ENCODE measurements at regions of chr4 and their contacts with region 1.

Region 1: DNA sequence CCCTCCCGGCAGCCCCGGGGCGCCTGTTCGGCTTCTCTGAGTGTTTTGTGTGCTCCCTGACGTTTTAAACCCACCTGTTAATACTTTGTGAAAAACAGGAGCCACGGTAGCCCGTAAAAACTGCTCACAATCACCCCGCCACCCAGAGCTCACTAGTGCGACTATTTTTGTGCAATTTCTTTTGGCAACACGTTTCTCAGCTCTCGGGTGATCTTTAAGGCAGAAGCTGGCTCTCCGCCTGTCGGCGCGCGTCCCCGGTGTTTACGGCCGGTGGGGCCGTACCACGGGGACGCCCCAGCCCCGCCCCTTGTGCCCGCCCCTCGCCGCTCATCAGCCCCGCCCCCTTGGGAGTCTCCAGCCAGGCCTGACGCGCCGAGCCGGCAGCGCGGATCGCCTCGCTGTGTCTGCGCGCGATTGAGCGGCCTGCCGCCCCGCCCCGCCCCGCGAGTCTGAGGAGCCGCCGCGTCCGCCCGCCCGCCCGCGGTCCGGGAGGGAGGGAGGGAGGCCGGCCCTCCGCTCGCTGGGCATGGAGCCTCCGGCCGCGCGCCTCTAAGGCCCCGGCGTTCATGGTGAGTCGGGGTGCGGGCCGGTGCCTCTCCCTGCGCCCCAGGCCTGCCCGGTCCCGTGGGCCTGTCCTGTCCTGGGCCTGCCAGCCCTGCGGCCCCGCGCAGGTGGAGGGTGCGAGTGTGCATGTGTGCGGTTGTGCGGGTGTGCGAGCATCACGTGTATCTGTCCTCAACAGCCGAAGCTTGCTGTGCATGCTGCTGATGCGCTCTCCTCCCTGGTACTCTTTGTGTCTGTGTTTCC is 56.2 kb upstream of the TADA2B start:
- DNase-seq: peak; percentile 94
- H3K4me3 Mint-ChIP-seq: peak overlapping the region; percentile 100
- H3K27ac Mint-ChIP-seq: peak overlapping the region; percentile 94
- H3K4me1 Mint-ChIP-seq: peaks cover 83% of the 10 kb centered on the region
- H3K27me3 Mint-ChIP-seq: no peaks in the 10 kb centered on the region

Region 2: DNA sequence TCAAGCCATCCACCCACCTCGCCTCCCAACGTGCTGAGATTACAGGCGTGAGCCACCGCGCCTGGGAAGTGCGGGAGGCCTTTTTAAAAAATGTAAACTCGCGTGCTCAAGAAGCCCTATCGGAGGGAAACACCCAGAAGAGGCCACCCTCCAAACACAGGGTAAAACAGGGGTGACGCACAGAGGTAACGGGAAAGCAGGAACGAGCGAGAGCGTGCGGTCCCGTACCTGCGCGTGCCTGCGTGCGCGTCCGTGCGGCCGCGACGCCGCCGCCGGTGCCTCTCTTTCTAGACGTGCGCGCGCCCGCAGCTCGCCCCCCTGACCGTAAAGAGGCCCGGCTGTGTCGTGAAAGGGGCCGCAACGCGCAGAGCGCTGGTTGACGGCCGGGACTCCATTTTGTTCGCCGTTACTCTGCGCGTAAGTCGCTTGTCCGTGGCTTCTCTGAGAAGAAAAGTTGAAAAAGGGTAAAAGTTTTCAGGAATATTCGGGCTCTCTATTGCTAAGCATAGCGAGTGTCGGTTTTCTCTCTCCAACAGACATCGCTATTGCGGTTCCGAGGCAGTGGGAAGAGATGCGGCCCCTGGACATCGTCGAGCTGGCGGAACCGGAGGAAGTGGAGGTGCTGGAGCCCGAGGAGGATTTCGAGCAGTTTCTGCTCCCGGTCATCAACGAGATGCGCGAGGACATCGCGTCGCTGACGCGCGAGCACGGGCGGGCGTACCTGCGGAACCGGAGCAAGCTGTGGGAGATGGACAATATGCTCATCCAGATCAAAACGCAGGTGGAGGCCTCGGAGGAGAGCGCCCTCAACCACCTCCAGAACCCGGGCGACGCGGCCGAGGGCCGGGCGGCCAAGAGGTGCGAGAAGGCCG is 346.5 kb before region 1 on chr4 and contains the start of gene MRFAP1:
- intact Hi-C with region 1: loop called (anchors 2 kb)
- DNase-seq: peak; percentile 92
- H3K4me3 Mint-ChIP-seq: peak within 1 kb of the TSS; percentile 95
- H3K27ac Mint-ChIP-seq: peak within 1 kb of the TSS; percentile 98
- H3K4me1 Mint-ChIP-seq: peaks cover 24% of the 10 kb centered on the region
- H3K27me3 Mint-ChIP-seq: peaks cover 1% of the 10 kb centered on the region
- total RNA-seq, gene MRFAP1: 115 and 119 TPM in 2 replicates

Region 3: GRCh38 chr4:6716018-6716911 is 270.7 kb before region 1 on chr4 and contains the start of gene BLOC1S4:
- intact Hi-C with region 1: loop called (anchors 1 kb)
- DNase-seq: peak; percentile 87
- H3K4me3 Mint-ChIP-seq: peak within 1 kb of the TSS; percentile 93
- H3K27ac Mint-ChIP-seq: peak within 1 kb of the TSS; percentile 88
- H3K4me1 Mint-ChIP-seq: peaks cover 27% of the 10 kb centered on the region
- H3K27me3 Mint-ChIP-seq: peaks cover 8% of the 10 kb centered on the region
- total RNA-seq, gene BLOC1S4: 21.5 and 23.6 TPM in 2 replicates

Region 4: DNA sequence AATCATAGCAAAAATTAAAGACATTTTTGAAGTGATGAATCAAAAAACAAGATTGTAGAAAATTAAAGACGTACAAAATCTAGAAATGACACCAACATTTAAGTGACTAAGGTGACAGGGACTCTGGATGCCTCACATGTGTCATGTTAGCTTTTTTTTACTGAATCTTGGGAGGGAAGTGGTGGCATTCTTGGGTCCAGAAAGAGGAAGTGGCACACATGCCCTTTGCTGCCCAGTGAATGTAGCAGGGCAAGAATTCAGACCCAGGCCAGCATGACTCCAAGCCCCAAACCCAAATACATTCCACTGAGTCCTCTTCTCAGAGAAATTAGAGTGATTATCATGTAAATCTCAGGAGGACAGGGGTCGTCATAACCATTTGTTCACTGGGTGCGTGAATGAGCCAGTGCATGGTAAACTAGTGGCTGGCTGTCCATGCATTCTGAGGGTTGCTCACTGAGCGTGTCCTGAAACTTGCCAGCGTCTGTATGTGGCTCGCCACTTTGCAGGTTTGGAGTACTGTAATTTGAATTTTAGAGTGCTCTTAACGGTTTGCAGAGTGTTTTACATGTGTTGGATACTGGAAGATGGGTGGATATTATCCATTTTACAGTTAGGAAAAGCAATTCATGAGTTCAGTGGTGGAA is 132.8 kb before region 1 on chr4:
- intact Hi-C with region 1: no loop called
- DNase-seq: no peak
- H3K4me3 Mint-ChIP-seq: no peak overlapping the region
- H3K27ac Mint-ChIP-seq: no peak overlapping the region
- H3K4me1 Mint-ChIP-seq: peaks cover 26% of the 10 kb centered on the region
- H3K27me3 Mint-ChIP-seq: no peaks in the 10 kb centered on the region

Region 5: GRCh38 chr4:6917461-6918271 is 69.3 kb before region 1 on chr4:
- intact Hi-C with region 1: loop called (anchors 2 kb)
- DNase-seq: no peak
- H3K4me3 Mint-ChIP-seq: peak overlapping the region; percentile 71
- H3K27ac Mint-ChIP-seq: peak overlapping the region; percentile 88
- H3K4me1 Mint-ChIP-seq: peaks cover 67% of the 10 kb centered on the region
- H3K27me3 Mint-ChIP-seq: peaks cover 2% of the 10 kb centered on the region

Region 6: GRCh38 chr4:6999172-7000055 is 12.4 kb after region 1 on chr4:
- intact Hi-C with region 1: loop called (anchors 1 kb)
- DNase-seq: peak; percentile 52
- H3K4me3 Mint-ChIP-seq: peak overlapping the region; percentile 43
- H3K27ac Mint-ChIP-seq: peak overlapping the region; percentile 86
- H3K4me1 Mint-ChIP-seq: peaks cover 38% of the 10 kb centered on the region
- H3K27me3 Mint-ChIP-seq: no peaks in the 10 kb centered on the region

Region 7: DNA sequence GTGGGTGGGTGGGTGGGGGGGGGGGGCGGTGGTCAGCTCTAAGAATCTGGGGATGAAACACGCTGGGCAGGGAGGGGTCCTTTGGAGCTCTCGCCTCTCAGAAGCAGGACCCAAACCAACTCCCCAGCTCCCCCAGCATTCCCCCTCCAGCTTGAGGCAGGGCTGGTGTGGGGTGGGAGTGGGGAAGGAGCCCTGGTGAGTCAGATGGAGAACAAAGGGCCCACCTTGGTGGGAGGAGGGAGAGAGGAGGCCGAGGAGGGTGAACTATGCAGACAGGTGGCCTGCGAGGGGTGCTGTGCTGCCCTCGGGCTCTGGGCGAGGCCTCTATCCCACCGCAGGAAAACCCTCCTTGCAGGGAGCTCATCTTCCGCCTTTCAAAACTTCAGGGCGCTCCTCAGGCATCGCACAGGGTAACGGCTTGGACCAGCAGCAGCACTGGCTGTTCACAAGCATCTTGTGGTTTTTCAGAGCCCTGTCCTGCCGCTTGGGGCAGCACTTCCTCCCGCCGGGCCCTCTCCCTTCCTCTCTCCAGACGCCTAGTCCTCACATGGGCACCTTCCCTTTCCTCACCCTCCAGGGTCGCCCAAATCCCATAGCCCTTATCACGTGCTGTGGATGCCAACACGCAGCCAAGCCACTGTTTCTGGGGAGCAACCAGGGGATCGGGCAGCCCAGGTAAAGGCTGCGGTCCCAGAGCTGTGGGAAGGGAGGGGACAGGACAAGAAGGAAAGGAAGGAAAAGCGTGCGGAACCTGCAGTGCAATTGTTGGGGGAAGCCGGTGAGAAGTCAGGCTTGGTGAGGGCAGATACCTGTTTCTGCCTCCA is 114.9 kb after region 1 on chr4:
- intact Hi-C with region 1: loop called (anchors 1 kb)
- DNase-seq: peak; percentile 29
- H3K4me3 Mint-ChIP-seq: peak overlapping the region; percentile 89
- H3K27ac Mint-ChIP-seq: no peak overlapping the region
- H3K4me1 Mint-ChIP-seq: peaks cover 14% of the 10 kb centered on the region
- H3K27me3 Mint-ChIP-seq: peaks cover 15% of the 10 kb centered on the region

Measured in activated T-helper 1 cell treated with anti-CD3 and anti-CD28 coated beads, Interleukin-12 subunit alpha, Interleukin-12 subunit beta, Interleukin-2, Interleukin-4 antibody, amounts not matched to agents 30 ng/mL and 10 ng/mL and 1 ng/mL, durations not matched to agents 14 hours and 24 hours and 36 hours (primary cell).